Activated CD8-positive, alpha-beta T cell treated with anti-CD3 and anti-CD28 coated beads for 36 hours (primary cell): ENCODE measurements at regions of chr11 and their contacts with region 1.

Region 1: DNA sequence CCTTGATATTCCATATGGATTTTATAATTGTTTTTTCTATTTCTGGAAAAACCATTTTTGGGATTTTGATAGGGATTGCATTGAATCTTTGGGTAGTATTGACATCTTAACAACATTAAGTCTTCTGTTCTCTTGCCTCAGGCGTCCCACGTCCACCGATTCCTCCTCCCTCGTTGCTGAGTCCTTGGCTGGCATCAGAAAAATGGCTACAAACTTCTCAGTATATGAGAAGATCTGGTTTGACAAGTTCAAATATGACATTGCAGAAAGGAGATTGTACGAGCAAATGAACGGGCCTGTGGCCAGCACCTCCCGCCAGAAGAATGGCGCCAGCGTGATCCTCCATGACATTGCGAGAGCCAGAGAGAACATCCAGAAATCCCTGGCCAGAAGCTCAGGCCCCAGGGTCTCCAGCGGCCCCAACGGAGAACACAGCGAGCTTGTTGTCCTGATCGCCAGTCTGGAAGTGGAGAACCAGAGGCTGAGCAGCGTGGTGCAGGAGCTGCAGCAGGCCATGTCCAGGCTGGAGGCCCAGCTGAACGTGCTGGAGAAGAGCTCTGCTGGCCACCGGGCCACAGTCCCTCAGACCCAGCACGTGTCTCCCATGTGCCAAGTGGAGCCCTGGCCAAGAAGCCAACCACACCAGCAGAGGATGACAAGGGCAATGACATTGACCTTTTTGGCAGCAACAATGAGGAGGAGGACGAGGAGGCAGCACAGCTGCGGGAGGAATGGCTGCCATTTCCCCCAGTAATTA is 20.7 kb upstream of the SCGB1D1 start:
- DNase-seq: no peak
- ATAC-seq: no peak
- H3K4me3 Mint-ChIP-seq: no peak overlapping the region
- H3K27ac Mint-ChIP-seq: no peak overlapping the region
- H3K4me1 Mint-ChIP-seq: peaks cover 4% of the 10 kb centered on the region
- H3K27me3 Mint-ChIP-seq: peaks cover 22% of the 10 kb centered on the region
- CTCF ChIP-seq: no peak

Region 2: DNA sequence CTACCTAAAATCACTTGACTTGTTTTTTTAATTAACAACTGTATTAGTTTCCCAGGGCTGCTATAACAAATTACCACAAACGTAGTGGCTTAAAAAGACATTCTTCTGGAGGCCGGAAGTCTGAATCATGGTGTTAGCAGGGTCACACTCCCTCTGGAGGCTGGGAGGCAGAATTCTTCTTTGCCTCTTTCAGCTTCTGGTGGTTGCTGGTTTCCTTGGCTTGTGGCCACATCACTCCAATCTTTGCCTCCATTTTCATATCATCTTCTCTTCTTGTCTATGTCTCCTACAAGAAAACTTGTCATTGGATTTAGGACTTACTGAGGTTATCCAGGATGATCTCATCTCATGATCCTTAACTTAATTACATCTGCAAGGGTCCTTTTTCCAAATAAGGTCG is 52.8 kb before region 1 on chr11:
- CTCF ChIA-PET with region 1: no interaction called
- POLR2A ChIA-PET with region 1: no interaction called
- intact Hi-C with region 1: no loop called
- DNase-seq: no peak
- ATAC-seq: no peak
- H3K4me3 Mint-ChIP-seq: no peak overlapping the region
- H3K27ac Mint-ChIP-seq: no peak overlapping the region
- H3K4me1 Mint-ChIP-seq: peaks cover 2% of the 10 kb centered on the region
- H3K27me3 Mint-ChIP-seq: no peaks in the 10 kb centered on the region
- CTCF ChIP-seq: no peak

Region 3: DNA sequence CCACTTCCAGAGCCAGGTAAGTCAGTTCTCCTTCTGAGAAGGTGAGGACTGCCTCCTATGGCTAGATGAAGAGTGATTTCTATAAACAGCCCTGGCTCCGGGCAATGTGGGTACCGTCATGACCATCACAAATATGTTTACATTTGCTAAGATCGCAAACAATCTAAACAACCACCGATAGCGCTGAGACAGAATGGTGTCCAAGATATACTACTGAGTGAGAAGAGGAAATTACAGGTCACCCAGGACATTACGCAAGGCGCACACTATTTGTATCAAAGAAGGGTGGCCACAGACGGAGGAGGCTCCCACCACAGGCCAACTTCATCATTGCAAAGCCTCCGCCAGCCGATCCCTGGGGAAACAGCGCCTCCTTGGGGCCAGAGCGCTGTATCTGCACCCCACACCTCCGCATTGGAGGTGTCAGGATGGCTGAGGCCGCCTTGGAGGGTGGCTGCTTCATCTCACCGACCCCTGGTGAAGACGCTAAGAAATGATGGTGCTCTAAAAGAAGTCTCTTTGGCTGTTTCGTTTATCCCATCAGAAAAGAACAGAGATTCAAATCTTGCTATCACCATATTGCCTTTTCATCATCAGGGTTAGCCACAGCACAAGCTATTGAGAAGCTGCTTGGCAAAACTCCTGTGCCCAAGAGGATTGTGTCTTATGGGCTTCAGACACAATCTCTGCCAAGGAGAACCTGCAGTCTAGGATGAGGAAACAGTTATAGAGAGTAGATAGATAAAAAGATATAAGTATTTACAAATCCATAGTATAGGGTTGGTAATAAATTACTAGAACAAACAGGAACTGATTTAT is 155.7 kb after region 1 on chr11:
- CTCF ChIA-PET with region 1: interaction called, 16 read pairs
- POLR2A ChIA-PET with region 1: no interaction called
- intact Hi-C with region 1: no loop called
- DNase-seq: peak; percentile 83
- ATAC-seq: peak; percentile 99
- H3K4me3 Mint-ChIP-seq: no peak overlapping the region
- H3K27ac Mint-ChIP-seq: no peak overlapping the region
- H3K4me1 Mint-ChIP-seq: peaks cover 2% of the 10 kb centered on the region
- H3K27me3 Mint-ChIP-seq: peaks cover 5% of the 10 kb centered on the region
- CTCF ChIP-seq: peak; percentile 91